Ovary (tissue), 10 donors: ENCODE measurements at regions of chr10 and their contacts with region 1.

Region 1: DNA sequence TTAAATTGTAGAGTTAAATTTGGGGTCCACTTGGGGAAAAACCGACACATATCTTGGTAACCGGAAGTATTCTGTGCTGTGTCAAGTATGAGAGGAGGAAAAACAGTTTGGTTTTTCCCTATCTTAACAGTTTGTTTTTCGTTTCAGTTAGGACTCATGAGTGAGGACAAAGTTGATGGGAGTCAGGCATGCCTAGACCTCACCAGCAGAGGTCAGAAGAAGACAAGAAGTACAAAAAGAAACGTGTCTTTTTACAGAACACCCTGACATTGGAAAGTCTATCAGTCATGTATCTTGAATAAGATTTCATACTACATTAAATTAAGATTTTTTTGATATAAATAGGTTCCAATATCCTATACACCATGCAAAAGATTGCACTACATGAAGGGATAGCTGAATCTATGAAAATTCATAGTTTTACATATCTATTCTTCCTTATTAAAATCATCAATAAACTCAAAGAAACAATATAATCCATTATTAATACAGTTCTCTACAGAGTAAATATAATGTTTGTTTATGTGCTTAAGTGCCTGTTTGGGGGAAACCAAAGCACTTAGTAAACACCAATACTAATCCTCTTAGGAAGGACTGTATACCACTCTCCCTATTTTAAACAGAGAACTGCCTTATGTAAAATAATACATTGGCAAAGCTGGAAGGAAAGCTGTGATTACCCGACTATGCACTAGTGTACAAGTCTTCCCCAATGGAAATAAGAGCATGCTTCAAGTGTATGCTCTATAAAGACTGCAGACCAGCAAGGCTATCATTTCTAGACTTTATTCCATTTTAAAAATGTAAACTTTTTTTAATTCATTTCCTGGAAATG is 95.6 kb downstream of the USP6NL start:
- DNase-seq: peak in 2 of 5 donors; percentile 47 to 59
- H3K4me3 ChIP-seq: no peak overlapping the region
- H3K27ac ChIP-seq: no peak overlapping the region
- H3K4me1 ChIP-seq: peaks cover under 1% of the 10 kb centered on the region
- H3K27me3 ChIP-seq: no peaks in the 10 kb centered on the region
- CTCF ChIP-seq: peak; percentile 28 to 86 (median 84)
- EP300 ChIP-seq: no peak
- POLR2A ChIP-seq: no peak

Region 2: GRCh38 chr10:11724938-11725776 is 209.3 kb after region 1 on chr10:
- intact Hi-C with region 1: loop called (anchors 5 to 10 kb)
- DNase-seq: no peak
- H3K4me3 ChIP-seq: no peak overlapping the region
- H3K27ac ChIP-seq: no peak overlapping the region
- H3K4me1 ChIP-seq: no peaks in the 10 kb centered on the region
- H3K27me3 ChIP-seq: no peaks in the 10 kb centered on the region
- CTCF ChIP-seq: peak; percentile 46 to 82 (median 73)
- EP300 ChIP-seq: no peak
- POLR2A ChIP-seq: no peak

Region 3: GRCh38 chr10:11757821-11758463 is 242.1 kb after region 1 on chr10:
- intact Hi-C with region 1: loop called in 1 of 4 experiments (anchors 10 kb)
- DNase-seq: peak; percentile 83 to 89 (median 87)
- H3K4me3 ChIP-seq: no peak overlapping the region
- H3K27ac ChIP-seq: peak overlapping the region in 1 of 2 donors; percentile 72
- H3K4me1 ChIP-seq: peaks cover 19% of the 10 kb centered on the region
- H3K27me3 ChIP-seq: no peaks in the 10 kb centered on the region
- CTCF ChIP-seq: peak; percentile 77 to 91 (median 77)
- EP300 ChIP-seq: no peak
- POLR2A ChIP-seq: no peak